ENCODE measurements at regions of chr14 and their contacts with region 1.

Region 1: DNA sequence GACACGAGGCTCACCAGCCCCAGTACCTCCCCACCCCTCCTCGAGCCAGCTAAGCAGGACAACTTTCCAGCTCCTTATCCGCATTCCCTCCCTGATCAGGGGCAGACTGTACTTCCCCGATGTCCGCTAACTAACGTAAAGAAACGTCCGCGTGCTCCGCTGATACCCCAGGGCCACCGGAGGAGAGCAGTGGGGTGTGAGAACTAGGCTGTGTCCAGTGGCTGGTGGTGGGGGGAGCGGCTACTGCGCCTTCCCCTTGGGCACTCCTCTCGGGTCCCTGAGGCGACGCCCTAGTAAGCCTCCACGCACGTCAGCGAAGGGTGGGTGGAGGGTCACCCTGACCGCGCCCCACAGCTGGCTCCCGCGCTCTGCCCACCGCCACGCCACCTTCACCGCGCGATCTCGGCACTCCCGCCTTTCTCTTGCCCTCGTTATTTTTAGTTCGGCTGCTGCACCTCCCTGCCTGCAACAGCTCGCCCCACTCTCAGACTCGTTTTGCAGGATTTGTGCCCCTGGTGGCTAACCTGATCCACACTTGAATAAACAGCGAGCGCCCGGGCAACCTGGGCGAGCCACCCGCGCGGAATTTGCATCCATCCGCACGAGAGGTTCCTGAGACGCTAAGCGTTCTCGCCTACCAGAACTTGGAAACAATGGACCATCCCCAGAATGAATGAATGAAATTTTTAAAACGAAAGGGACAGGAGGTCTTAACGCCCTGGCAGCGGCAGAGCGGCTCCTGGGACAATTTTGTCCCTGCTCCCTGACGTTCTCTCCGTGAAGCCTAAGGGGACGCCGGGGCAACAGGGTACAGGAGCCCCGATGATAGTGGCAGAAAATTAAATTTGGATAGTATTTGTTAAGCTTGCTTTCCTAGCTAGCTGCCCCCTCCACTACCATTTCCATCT is 6.9 kb upstream of the BMP4 start:
- DNase-seq: peak in 1 of 2 experiments; percentile 59
- H3K4me3 ChIP-seq: peak overlapping the region; percentile 26 to 58 (median 48)
- H3K27ac ChIP-seq: no peak overlapping the region
- H3K4me1 ChIP-seq: peaks cover 2 to 21% (median 12%) of the 10 kb centered on the region in 4 experiments
- H3K27me3 ChIP-seq: peaks cover 14 to 35% (median 32%) of the 10 kb centered on the region in 4 experiments
- CTCF ChIP-seq: peak; percentile 16 to 37 (median 21)
- EP300 ChIP-seq: no peak
- POLR2A ChIP-seq: no peak
- RAD21 ChIP-seq: peak; percentile 16 to 34; a peak in 3 of 4 replicates

Region 2: DNA sequence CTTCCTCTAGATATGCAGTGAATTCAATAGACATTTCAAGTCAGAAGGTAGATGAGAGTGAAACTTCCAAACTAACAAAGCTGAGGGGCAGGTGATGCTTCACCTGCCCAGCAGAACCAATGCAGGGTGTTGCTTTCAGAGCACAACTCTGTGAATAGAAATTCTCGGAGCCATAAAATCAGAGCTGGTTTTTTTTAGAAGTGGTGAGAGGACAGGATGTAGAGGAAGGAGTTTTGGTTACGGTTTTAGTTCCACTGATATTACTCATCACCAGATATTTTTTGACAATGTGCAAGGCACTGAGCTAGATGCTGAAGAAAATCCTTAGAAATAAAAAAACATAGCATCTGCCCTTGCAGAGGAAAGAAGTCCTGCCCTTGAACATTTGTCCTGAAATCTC is 69.1 kb before region 1 on chr14:
- CTCF ChIA-PET with region 1: no interaction called
- POLR2A ChIA-PET with region 1: no interaction called
- DNase-seq: no peak
- H3K4me3 ChIP-seq: no peak overlapping the region
- H3K27ac ChIP-seq: no peak overlapping the region
- H3K4me1 ChIP-seq: peaks cover 0 to 6% (median 5%) of the 10 kb centered on the region in 4 experiments; a peak in 4 of 7 replicates
- H3K27me3 ChIP-seq: no peaks in the 10 kb centered on the region
- CTCF ChIP-seq: no peak
- EP300 ChIP-seq: no peak
- POLR2A ChIP-seq: no peak
- RAD21 ChIP-seq: no peak

Region 3: DNA sequence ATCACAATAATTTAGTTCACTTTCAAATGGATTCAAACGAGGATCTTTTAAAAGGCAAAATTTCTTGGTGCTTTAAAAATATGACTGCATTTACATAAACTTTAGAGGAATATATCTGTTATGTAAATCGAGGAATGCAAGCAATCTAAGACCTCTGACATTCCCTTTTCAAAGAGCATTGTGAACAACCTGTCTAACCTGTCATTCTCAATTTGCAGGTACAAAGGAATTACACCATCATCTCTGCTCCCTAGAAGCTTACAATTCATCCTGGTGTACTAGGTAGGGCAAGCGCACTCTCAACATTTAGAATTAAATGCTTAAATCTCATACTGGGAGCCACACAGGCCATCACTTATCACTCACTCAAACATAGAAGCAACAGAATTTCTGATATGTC is 42.5 kb before region 1 on chr14:
- CTCF ChIA-PET with region 1: no interaction called
- POLR2A ChIA-PET with region 1: no interaction called
- DNase-seq: no peak
- H3K4me3 ChIP-seq: no peak overlapping the region; a peak in 1 of 8 replicates
- H3K27ac ChIP-seq: no peak overlapping the region
- H3K4me1 ChIP-seq: peaks cover 0 to 9% (median 2%) of the 10 kb centered on the region in 4 experiments; a peak in 3 of 7 replicates
- H3K27me3 ChIP-seq: no peaks in the 10 kb centered on the region
- CTCF ChIP-seq: no peak
- EP300 ChIP-seq: no peak
- POLR2A ChIP-seq: no peak
- RAD21 ChIP-seq: no peak

Region 4: GRCh38 chr14:53953002-53953827 is 10.4 kb before region 1 on chr14:
- CTCF ChIA-PET with region 1: interaction called, 14 read pairs
- POLR2A ChIA-PET with region 1: interaction called, 15 read pairs
- DNase-seq: peak in 1 of 2 experiments; percentile 86
- H3K4me3 ChIP-seq: peak overlapping the region; percentile 54 to 86 (median 78)
- H3K27ac ChIP-seq: no peak overlapping the region
- H3K4me1 ChIP-seq: peaks cover 5 to 9% (median 7%) of the 10 kb centered on the region in 4 experiments
- H3K27me3 ChIP-seq: peaks cover 26 to 78% (median 67%) of the 10 kb centered on the region in 4 experiments
- CTCF ChIP-seq: no peak
- EP300 ChIP-seq: no peak
- POLR2A ChIP-seq: no peak
- RAD21 ChIP-seq: no peak; a peak in 1 of 4 replicates

Region 5: DNA sequence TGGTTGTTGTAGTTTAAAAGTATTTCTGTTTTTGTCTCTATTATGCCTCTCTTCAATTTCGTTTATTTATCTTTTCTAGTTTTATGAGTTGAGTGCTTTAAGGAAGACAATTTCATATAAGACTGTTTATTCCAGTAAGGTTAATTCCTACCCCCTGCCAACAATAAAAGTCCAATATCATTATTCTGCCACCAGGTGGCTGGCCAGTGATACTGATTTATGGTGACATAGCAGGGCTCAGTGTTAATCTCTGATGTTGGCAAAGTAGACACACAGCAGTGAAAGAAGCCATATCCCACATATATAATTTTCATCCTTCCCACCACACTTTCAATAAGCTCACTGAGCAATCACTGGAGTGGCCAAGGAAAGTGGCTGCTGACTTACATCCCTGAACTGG is 62.1 kb after region 1 on chr14:
- CTCF ChIA-PET with region 1: no interaction called
- POLR2A ChIA-PET with region 1: no interaction called
- DNase-seq: no peak
- H3K4me3 ChIP-seq: no peak overlapping the region
- H3K27ac ChIP-seq: no peak overlapping the region
- H3K4me1 ChIP-seq: no peaks in the 10 kb centered on the region
- H3K27me3 ChIP-seq: no peaks in the 10 kb centered on the region
- CTCF ChIP-seq: peak in 1 of 3 experiments; percentile 22; a peak in 1 of 4 replicates
- EP300 ChIP-seq: no peak
- POLR2A ChIP-seq: no peak
- RAD21 ChIP-seq: peak; percentile 32 to 46

Measured in H1 (cell line).